ENCODE measurements at regions of chr19 and their contacts with region 1.

Region 1: DNA sequence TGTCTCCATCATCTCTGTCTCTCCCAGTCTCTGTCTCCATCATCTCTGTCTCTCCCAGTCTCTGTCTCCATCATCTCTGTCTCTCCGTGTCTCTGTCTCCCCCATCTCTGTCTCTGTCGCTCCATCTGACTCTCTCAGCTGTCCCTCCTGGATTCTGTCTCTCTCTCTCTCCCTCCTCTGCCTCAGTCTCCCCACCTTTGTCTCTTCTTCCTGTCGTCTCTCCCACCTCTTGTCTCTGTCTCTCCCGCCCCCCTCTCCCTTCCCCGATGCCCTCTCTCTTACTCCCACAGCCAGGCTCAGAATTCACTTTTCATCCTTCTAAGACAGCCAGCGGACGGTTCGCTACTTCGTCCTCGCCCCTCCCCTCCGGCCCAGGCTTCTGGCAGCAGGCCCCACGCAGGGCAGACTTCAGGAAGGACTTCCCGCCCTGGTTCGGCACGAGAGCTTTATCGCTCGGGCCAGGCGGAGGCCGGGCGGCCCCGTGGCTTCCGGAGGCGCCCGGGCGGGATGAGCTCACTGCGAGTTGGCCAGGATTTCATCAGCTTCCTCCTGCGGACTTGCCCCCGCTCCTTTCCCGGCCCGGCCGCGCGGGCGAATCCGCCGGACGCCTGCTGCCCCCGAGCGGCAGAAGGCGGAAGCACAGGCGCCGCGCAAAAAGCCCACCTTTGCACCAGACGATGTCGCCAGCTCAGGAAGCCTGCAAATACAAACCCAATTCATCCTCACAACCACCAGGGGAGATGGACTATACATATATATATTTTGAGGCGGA is 12.4 kb upstream of the CCDC9 start:
- DNase-seq: peak; percentile 95
- ATAC-seq: peak; percentile 61
- H3K4me3 Mint-ChIP-seq: peak overlapping the region; percentile 64
- H3K27ac Mint-ChIP-seq: peak overlapping the region; percentile 82
- H3K4me1 Mint-ChIP-seq: peaks cover 19% of the 10 kb centered on the region
- H3K27me3 Mint-ChIP-seq: peaks cover 45% of the 10 kb centered on the region
- CTCF ChIP-seq: peak; percentile 88

Region 2: DNA sequence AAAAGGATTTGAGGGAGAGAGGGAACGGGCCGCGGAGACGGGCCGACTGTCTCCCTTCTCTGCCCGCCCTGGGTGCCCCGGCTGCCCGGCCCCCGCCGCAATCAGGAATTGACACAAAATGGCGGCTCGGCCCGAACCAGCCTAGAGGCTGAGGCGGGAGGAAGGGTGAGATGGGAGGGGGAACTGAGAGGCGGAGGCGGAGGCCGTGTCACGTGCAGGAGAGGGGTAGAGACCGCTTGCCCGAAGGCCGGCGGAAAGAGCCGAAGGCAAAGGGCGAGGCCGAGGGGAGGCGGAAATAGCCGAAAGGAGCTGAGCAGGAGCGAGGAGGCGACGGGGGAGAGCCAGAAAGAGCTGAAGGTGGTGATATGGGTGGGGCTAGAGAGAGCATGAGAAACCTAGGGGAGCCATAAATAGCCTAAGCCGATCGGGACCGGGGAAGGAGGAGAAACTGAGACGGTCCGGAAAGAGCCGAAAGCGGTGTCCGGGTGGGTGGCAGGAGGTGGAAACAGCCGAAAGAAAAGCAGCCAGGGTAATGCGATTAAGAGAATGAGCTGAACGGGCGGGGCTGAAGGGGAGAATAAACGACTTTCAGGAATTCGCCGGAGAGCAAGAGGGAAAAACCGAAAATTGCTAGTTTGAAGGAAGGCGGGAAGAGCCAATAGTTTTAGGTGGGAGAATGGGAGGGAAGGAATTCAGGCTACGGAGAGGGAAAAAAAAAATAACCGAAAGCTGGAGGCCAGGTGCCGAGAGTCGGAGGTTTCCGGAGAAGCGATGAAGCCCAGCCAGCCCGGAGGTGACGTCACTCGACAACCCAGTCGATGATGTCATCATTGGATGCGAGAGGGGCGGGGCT is 130.7 kb before region 1 on chr19 and contains the start of gene ZC3H4:
- CTCF ChIA-PET with region 1: interaction called, 21 read pairs
- POLR2A ChIA-PET with region 1: interaction called, 13 read pairs
- DNase-seq: peak; percentile 100
- ATAC-seq: peak; percentile 94
- H3K4me3 Mint-ChIP-seq: peak within 1 kb of the TSS; percentile 91
- H3K27ac Mint-ChIP-seq: peak within 1 kb of the TSS; percentile 99
- H3K4me1 Mint-ChIP-seq: peaks cover 28% of the 10 kb centered on the region
- H3K27me3 Mint-ChIP-seq: no peaks in the 10 kb centered on the region
- CTCF ChIP-seq: no peak
- total RNA-seq, gene ZC3H4: 67.2 to 75.5 TPM (median 73.2 TPM) in 3 replicates

Region 3: GRCh38 chr19:47157431-47158321 is 86.3 kb before region 1 on chr19:
- CTCF ChIA-PET with region 1: interaction called, 26 read pairs
- POLR2A ChIA-PET with region 1: interaction called, 4 read pairs
- DNase-seq: peak; percentile 72
- ATAC-seq: peak; percentile 92
- H3K4me3 Mint-ChIP-seq: peak overlapping the region; percentile 51
- H3K27ac Mint-ChIP-seq: peak overlapping the region; percentile 99
- H3K4me1 Mint-ChIP-seq: peaks cover 43% of the 10 kb centered on the region
- H3K27me3 Mint-ChIP-seq: no peaks in the 10 kb centered on the region
- CTCF ChIP-seq: no peak

Region 4: DNA sequence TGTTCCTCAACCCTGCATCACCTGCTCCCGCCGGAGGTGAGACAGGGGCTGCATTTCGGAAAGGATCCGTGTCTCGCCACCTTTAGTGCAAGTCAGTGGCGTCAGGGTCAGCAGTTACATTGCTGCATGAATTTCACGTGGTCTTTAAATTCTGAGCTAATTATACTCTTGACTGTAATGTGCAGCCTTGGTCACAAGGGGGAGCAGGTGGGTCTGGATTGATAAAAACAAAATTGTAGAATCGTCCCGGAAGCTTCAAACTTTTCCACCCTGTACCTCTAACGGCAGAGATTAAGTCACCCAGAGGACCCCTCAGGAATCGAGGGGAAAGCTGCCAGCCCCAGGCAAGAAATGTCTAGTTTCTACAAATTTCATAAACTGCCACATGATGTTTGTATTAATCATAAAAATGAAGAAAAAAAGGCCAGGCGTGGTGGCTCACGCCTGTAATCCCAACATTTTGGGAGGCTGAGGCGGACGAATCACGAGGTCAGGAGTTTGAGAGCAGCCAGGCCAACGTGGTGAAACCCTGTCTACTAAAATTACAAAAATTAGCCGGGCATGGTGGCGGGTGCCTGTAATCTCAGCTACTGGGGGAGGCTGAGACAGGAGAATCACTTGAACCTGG is 33.2 kb before region 1 on chr19:
- CTCF ChIA-PET with region 1: interaction called, 402 read pairs
- POLR2A ChIA-PET with region 1: interaction called, 25 read pairs
- DNase-seq: peak; percentile 82
- ATAC-seq: peak; percentile 58
- H3K4me3 Mint-ChIP-seq: no peak overlapping the region
- H3K27ac Mint-ChIP-seq: peak overlapping the region; percentile 98
- H3K4me1 Mint-ChIP-seq: peaks cover 20% of the 10 kb centered on the region
- H3K27me3 Mint-ChIP-seq: no peaks in the 10 kb centered on the region
- CTCF ChIP-seq: peak; percentile 82

Region 5: DNA sequence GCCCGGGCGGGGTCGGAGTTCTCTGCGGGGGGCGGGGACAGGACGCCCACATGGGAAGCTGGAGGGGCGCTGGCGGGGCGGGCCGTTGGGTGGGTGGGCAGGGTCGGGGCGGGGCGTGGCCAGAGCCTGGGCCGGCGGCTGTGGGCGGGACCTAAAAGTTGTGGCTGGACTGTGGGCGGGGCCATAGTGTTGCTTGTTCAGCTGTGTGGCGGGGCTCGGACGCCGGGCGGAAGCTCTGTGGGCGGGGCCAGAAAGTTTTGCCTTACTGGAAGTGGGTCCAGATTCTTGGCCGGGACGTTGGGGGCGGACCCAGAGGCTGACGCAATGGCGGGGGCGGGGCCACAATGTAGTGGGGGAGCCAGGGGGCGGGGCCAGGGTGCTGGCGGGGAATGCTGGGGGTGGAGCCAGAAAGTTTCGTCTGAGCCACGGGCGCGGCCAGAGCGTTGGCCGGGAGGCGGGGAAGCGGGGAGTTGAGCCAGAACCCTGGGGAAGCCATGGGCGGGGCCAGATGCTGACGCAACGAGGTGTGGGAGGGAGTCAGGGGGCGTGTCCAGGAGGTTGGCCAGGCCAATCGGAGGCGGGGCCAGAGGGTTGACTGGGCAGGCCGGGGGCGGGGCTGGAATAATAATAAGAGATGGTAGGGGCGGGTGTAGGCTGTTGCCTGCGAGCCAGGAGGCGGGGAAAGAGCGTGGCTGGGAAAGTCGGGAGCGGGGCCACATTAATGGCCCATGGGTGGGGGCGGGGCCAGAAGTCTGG is 12.9 kb after region 1 on chr19:
- CTCF ChIA-PET with region 1: interaction called, 69 read pairs
- POLR2A ChIA-PET with region 1: interaction called, 33 read pairs
- DNase-seq: peak; percentile 100
- ATAC-seq: peak; percentile 86
- H3K4me3 Mint-ChIP-seq: peak overlapping the region; percentile 87
- H3K27ac Mint-ChIP-seq: peak overlapping the region; percentile 97
- H3K4me1 Mint-ChIP-seq: peaks cover 12% of the 10 kb centered on the region
- H3K27me3 Mint-ChIP-seq: peaks cover 19% of the 10 kb centered on the region
- CTCF ChIP-seq: no peak

Region 6: DNA sequence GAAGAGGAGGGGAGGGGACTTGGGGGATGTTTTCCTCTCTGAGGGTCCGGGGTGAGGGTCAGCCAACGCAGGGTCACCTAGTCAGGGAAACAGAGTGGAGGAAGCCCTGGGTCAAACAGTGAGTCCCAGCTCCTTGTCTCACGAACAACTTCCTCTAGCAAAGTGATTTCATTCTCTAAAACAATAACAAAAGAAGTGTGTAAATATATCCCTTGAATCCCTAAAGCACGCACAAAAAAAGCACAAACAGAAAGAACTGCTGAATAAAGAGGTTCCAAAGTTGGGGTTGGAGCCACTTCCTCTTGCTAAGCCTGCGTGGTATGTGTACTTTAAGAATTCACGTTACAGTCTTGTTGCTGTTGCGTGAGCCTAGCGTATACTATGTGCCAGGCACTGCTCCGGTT is 86.5 kb after region 1 on chr19:
- CTCF ChIA-PET with region 1: no interaction called
- POLR2A ChIA-PET with region 1: no interaction called
- DNase-seq: no peak
- ATAC-seq: no peak
- H3K4me3 Mint-ChIP-seq: no peak overlapping the region
- H3K27ac Mint-ChIP-seq: no peak overlapping the region
- H3K4me1 Mint-ChIP-seq: 0 out of 2 replicates have a peak, but pooled peaks cover 4% of the 10 kb centered on the region
- H3K27me3 Mint-ChIP-seq: peaks cover 4% of the 10 kb centered on the region; the same call in 1 of the 2 replicates
- CTCF ChIP-seq: no peak

Measured in WTC11 (cell line).